Tibial artery (tissue), 4 donors: ENCODE measurements at regions of chrX and their contacts with region 1.

Region 1: GRCh38 chrX:140141444-140142029 is 176.2 kb upstream of the CXorf66 start:
- DNase-seq: no peak
- H3K4me3 ChIP-seq: no peak overlapping the region
- H3K27ac ChIP-seq: no peak overlapping the region
- H3K4me1 ChIP-seq: no peaks in the 10 kb centered on the region
- H3K27me3 ChIP-seq: no peaks in the 10 kb centered on the region
- CTCF ChIP-seq: peak; percentile 40 to 48

Region 2: DNA sequence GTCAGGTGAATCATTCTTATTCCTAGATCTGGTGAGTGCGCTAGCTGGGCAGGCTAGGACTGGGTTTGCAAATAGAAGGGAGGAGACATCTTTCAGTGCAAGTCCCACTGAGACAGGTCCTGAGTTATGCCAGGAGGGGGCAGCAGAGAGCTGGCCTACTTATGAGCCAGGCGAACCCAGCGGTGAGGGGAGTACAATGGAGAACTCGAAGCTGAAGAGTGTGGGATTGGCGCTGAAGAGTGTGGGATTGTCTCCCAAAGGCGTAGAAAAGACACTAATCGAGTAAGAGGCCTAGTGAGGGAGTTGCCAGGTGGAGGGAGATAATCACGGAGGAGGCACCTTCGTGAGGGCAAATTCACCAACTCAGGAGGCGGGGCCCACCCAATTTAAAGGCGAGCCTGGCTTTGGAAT is 84.5 kb before region 1 on chrX:
- intact Hi-C with region 1: loop called (anchors 5 kb)
- DNase-seq: peak; percentile 68 to 71
- H3K4me3 ChIP-seq: no peak overlapping the region
- H3K27ac ChIP-seq: no peak overlapping the region
- H3K4me1 ChIP-seq: no peaks in the 10 kb centered on the region
- H3K27me3 ChIP-seq: no peaks in the 10 kb centered on the region
- CTCF ChIP-seq: peak; percentile 46 to 73

Region 3: GRCh38 chrX:140608111-140608510 is 466.6 kb after region 1 on chrX:
- intact Hi-C with region 1: no loop called
- DNase-seq: no peak
- H3K4me3 ChIP-seq: no peak overlapping the region
- H3K27ac ChIP-seq: no peak overlapping the region
- H3K4me1 ChIP-seq: no peaks in the 10 kb centered on the region
- H3K27me3 ChIP-seq: no peaks in the 10 kb centered on the region
- CTCF ChIP-seq: no peak